Body of pancreas (tissue), 4 donors: ENCODE measurements at regions of chr17 and their contacts with region 1.

Region 1: GRCh38 chr17:67431249-67432048 is 54.4 kb downstream of the PITPNC1 start:
- DNase-seq: no peak
- ATAC-seq: no peak
- H3K4me3 ChIP-seq: no peak overlapping the region
- H3K27ac ChIP-seq: peak overlapping the region in 1 of 4 donors; percentile 14
- H3K4me1 ChIP-seq: peaks cover 6% of the 10 kb centered on the region
- H3K27me3 ChIP-seq: no peaks in the 10 kb centered on the region
- CTCF ChIP-seq: no peak
- POLR2A ChIP-seq: no peak

Region 2: GRCh38 chr17:67488161-67488560 is 56.7 kb after region 1 on chr17:
- intact Hi-C with region 1: loop called (anchors 10 kb)
- DNase-seq: peak in 2 of 4 donors; percentile 30 to 36
- ATAC-seq: no peak
- H3K4me3 ChIP-seq: no peak overlapping the region
- H3K27ac ChIP-seq: peak overlapping the region in 1 of 4 donors; percentile 49
- H3K4me1 ChIP-seq: peaks cover 29% of the 10 kb centered on the region
- H3K27me3 ChIP-seq: no peaks in the 10 kb centered on the region
- CTCF ChIP-seq: no peak
- POLR2A ChIP-seq: no peak